Keratinocyte (primary cell): ENCODE measurements at regions of chr19 and their contacts with region 1.

Region 1: GRCh38 chr19:7267792-7268704 is 26.2 kb downstream of the INSR start:
- DNase-seq: no peak
- H3K4me3 ChIP-seq: no peak overlapping the region
- H3K27ac ChIP-seq: no peak overlapping the region
- H3K4me1 ChIP-seq: no peaks in the 10 kb centered on the region
- H3K27me3 ChIP-seq: no peaks in the 10 kb centered on the region
- CTCF ChIP-seq: no peak

Region 2: GRCh38 chr19:7337380-7338194 is 69.5 kb after region 1 on chr19:
- dilution Hi-C with region 1: loop called (anchors 10 kb)
- DNase-seq: no peak
- H3K4me3 ChIP-seq: no peak overlapping the region
- H3K27ac ChIP-seq: no peak overlapping the region
- H3K4me1 ChIP-seq: no peaks in the 10 kb centered on the region
- H3K27me3 ChIP-seq: no peaks in the 10 kb centered on the region
- CTCF ChIP-seq: no peak